ENCODE measurements at regions of chr9 and their contacts with region 1.

Region 1: DNA sequence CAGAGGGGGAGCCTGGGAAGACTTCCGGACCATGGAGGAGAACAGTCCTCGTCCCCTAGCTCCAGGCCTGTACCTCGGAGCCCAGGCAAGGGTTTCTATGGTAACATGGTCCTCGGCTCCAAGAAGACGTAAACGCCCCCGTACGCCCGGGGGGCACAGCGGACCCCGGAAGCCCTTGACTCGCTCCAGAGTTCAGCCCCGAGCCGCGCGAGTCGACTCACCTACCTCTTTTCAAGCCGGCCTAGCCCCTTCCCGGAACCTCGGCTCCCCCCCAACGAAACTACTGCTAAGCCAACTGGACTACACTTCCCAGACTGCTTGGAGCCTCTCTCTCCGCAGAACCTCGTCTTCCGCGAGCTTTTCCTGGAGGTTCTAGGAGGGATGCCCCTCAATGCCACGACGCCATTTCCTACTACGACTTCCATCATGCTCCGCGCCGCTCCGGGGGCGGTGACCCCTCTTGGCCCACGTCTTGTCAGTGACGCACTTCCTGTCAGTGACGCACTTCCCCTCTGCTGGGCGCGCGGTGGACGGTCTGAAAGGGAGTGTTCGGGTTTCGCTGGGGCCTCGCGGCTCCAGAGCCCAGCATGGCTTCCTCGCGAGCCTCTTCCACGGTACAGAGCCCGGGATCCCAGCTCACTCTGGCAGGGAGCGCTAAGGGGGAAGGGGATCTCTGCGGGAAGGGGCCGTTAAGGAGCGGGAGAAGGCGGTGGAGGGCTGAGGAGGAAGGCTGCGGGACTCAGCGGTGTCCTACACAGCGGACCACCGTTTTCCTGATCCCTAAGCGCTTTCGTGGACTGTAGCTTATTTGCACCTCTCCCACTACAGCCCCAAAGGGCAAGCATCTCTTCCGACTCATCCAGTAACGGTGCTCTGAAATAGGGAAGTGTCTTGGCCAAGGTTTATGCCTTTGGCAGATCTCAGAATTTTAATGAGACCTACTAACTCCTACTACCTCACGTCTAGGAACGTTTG is at the starts of genes CDC26 and PRPF4:
- DNase-seq: peak; percentile 98
- ATAC-seq: peak; percentile 97
- total RNA-seq, gene CDC26: 38.3 TPM
- total RNA-seq, gene PRPF4: 11.0 TPM

Region 2: GRCh38 chr9:113221003-113221799 is 54.2 kb before region 1 on chr9 and contains the starts of genes FKBP15 and SLC31A1:
- intact Hi-C with region 1: loop called (anchors 2 kb)
- DNase-seq: peak; percentile 98
- ATAC-seq: peak; percentile 99
- total RNA-seq, gene FKBP15: 19.4 TPM
- total RNA-seq, gene SLC31A1: 12.0 TPM

Region 3: DNA sequence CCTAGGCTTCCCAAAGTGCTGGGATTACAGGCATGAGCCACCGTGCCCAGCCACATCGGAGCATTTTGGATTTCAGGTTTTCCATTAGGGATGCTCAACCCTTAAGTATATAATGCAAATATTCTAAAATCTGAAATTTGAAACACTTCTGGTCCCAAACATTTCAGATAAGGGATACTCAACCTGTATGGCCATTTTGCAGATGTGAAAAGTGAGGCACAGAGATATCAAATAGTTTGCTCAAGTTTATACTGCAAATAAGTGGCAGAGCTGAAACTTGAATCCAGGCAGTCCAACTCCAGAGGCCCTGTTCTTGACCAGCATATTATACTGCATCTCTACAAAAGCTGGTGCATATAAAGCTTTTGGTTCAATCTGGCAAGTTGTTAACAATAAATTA is 62.3 kb after region 1 on chr9:
- intact Hi-C with region 1: loop called (anchors 2 kb)
- DNase-seq: no peak
- ATAC-seq: no peak

Measured in Right ventricle myocardium inferior (tissue), 1 donor.